ENCODE measurements at regions of chr17 and their contacts with region 1.

Region 1: DNA sequence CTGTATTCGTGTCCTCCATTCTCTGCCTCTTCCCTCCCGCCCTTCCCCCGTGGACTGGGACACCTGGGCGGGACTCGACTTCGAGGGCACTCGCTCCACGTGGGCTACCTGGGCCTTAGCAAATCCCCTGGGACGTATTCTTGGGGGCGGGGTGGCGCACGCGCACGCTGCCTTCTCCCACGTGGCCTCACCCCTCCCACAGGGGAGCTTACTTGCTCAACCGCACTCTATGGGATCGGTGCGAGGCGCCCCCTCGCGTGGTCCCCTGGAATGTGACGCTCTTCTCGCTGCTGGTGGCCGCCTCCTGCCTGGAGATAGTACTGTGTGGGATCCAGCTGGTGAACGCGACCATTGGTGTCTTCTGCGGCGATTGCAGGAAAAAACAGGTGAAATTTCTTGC is 3.5 kb downstream of the VMO1 start:
- DNase-seq: no peak
- ATAC-seq: no peak
- H3K4me3 ChIP-seq: no peak overlapping the region
- H3K27ac ChIP-seq: no peak overlapping the region
- H3K4me1 ChIP-seq: peaks cover 6% of the 10 kb centered on the region
- H3K27me3 ChIP-seq: no peaks in the 10 kb centered on the region
- CTCF ChIP-seq: no peak

Region 2: DNA sequence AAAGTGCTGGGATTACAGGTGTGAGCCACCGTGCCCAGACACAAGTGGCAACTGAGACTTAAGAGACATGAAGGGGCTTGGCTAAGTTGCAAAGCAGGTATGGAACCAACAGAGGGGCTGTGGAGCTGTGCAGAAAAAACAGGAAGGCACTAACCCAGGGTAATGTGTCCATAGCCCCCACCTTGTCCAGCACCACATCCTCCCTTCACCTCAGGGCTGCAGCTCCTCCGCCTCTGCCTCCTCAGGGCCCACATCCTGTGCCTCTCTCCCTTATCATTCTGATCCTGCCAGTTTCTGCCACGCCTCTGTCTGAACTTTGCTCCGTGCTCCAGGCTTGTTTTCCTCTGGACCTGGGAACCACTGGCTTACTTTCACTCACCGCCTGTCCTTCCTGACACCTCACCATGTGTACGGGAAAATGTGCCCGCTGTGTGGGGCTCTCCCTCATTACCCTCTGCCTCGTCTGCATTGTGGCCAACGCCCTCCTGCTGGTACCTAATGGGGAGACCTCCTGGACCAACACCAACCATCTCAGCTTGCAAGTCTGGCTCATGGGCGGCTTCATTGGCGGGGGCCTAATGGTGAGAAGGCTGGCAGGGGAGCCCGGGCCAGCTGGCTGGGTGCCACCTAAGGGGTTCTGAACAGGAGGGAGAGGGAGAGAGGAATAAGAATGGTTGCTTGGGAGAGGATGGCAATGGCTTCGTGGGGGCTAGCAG is 11.0 kb before region 1 on chr17 and contains the start of gene TM4SF5:
- CTCF ChIA-PET with region 1: no interaction called
- POLR2A ChIA-PET with region 1: no interaction called
- intact Hi-C with region 1: no loop called
- DNase-seq: peak; percentile 28
- ATAC-seq: peak; percentile 59
- H3K4me3 ChIP-seq: 0 out of 2 replicates have a peak within 1 kb of the TSS, but pooled peaks have one; percentile 15
- H3K27ac ChIP-seq: no peak within 1 kb of the TSS
- H3K4me1 ChIP-seq: peaks cover 12% of the 10 kb centered on the region
- H3K27me3 ChIP-seq: no peaks in the 10 kb centered on the region
- CTCF ChIP-seq: no peak
- total RNA-seq, gene TM4SF5: not detected in 2 replicates

Region 3: GRCh38 chr17:4872786-4873185 is 90.1 kb after region 1 on chr17:
- CTCF ChIA-PET with region 1: no interaction called
- POLR2A ChIA-PET with region 1: interaction called, 12 read pairs
- intact Hi-C with region 1: no loop called
- DNase-seq: no peak
- ATAC-seq: no peak
- H3K4me3 ChIP-seq: no peak overlapping the region
- H3K27ac ChIP-seq: no peak overlapping the region
- H3K4me1 ChIP-seq: no peaks in the 10 kb centered on the region
- H3K27me3 ChIP-seq: no peaks in the 10 kb centered on the region
- CTCF ChIP-seq: no peak